Pancreas (tissue), 10 donors: ENCODE measurements at regions of chr5 and their contacts with region 1.

Region 1: GRCh38 chr5:141992349-141992963 is 20.4 kb downstream of the GNPDA1 start:
- DNase-seq: peak in 5 of 6 donors; percentile 50 to 81 (median 66)
- ATAC-seq: peak; percentile 82 to 91 (median 90)
- H3K4me3 ChIP-seq: no peak overlapping the region
- H3K27ac ChIP-seq: no peak overlapping the region
- H3K4me1 ChIP-seq: no peaks in the 10 kb centered on the region
- H3K27me3 ChIP-seq: no peaks in the 10 kb centered on the region
- CTCF ChIP-seq: peak; percentile 58 to 72 (median 68)

Region 2: GRCh38 chr5:142133330-142134206 is 141.1 kb after region 1 on chr5:
- intact Hi-C with region 1: loop called in 1 of 3 experiments (anchors 10 kb)
- DNase-seq: no peak
- ATAC-seq: peak in 2 of 4 donors; percentile 44 to 52
- H3K4me3 ChIP-seq: no peak overlapping the region
- H3K27ac ChIP-seq: no peak overlapping the region
- H3K4me1 ChIP-seq: peaks cover 2 to 17% (median 6%) of the 10 kb centered on the region in 3 donors
- H3K27me3 ChIP-seq: no peaks in the 10 kb centered on the region
- CTCF ChIP-seq: no peak